ENCODE measurements at regions of chr2 and their contacts with region 1.

Region 1: GRCh38 chr2:30711646-30712085 is 95.6 kb downstream of the CAPN13 start:
- DNase-seq: peak; percentile 86
- H3K4me3 Mint-ChIP-seq: no peak overlapping the region
- H3K27ac Mint-ChIP-seq: no peak overlapping the region
- H3K4me1 Mint-ChIP-seq: peaks cover 15% of the 10 kb centered on the region
- H3K27me3 Mint-ChIP-seq: no peaks in the 10 kb centered on the region

Region 2: DNA sequence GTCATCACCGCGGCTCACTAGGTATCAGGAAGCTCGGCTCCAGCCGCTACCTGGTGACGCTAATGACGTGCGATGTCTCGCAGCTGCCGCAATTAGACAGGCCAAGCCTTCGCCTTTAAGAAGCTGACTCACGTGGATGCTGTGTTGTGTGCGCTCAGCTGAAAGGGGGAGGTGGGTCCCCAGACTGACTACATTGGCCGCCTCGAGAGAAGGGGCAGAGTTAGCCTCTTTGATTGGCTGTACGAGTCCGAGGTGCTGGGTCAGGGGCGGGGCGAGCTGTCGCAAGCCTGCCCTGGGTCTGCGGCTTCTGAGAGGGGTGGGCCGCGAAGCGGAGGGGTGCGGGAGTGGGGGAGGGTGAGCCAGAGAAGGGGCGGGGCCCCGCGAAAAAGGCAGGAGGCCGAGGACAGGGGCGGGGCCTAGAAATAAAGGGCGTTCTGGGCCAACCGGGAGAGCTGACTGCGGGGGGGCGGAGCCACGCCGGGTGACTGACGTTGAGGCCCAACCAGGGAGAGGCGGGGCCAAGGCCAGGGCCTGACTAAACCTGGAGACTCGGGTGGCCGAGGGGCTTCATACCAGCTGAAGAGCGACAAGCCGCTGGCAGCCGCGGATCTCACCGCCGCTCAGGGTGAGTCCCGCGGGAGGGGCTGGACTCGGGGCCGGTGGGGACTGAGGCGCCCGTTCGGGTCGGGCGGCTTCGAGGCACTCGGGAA is 565.1 kb before region 1 on chr2 and contains the start of gene YPEL5:
- CTCF ChIA-PET with region 1: interaction called, 21 read pairs
- POLR2A ChIA-PET with region 1: interaction called, 3 read pairs
- DNase-seq: peak; percentile 99
- H3K4me3 Mint-ChIP-seq: peak within 1 kb of the TSS; percentile 81
- H3K27ac Mint-ChIP-seq: peak within 1 kb of the TSS; percentile 93
- H3K4me1 Mint-ChIP-seq: peaks cover 40% of the 10 kb centered on the region
- H3K27me3 Mint-ChIP-seq: no peaks in the 10 kb centered on the region
- total RNA-seq, gene YPEL5: 51.2 to 52.9 TPM

Region 3: DNA sequence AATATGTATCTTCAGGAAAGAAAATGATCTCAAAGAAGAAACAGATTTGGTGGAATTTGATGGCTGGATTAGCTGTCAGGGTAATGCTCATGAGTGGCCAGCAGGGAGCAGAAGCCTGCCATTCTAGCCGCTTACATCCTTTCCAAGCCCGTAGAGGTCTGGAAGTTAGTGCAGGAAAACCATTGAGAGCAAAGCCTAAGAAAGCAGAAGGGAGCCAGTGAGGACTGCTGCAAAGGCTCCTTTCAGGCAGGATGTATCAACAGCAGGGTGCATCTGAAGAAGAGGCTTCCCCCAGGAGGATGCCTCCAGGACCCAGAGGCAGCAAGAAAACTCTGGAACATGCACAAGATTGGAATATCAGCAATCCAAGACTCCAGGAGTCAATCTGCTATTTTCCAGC is 503.2 kb before region 1 on chr2:
- CTCF ChIA-PET with region 1: interaction called, 128 read pairs
- POLR2A ChIA-PET with region 1: interaction called, 11 read pairs
- DNase-seq: peak; percentile 41
- H3K4me3 Mint-ChIP-seq: no peak overlapping the region
- H3K27ac Mint-ChIP-seq: no peak overlapping the region
- H3K4me1 Mint-ChIP-seq: peaks cover 16% of the 10 kb centered on the region
- H3K27me3 Mint-ChIP-seq: no peaks in the 10 kb centered on the region

Region 4: GRCh38 chr2:30686000-30686399 is 25.7 kb before region 1 on chr2:
- CTCF ChIA-PET with region 1: interaction called, 23 read pairs
- POLR2A ChIA-PET with region 1: no interaction called
- DNase-seq: no peak
- H3K4me3 Mint-ChIP-seq: no peak overlapping the region
- H3K27ac Mint-ChIP-seq: no peak overlapping the region
- H3K4me1 Mint-ChIP-seq: no peaks in the 10 kb centered on the region
- H3K27me3 Mint-ChIP-seq: no peaks in the 10 kb centered on the region

Region 5: DNA sequence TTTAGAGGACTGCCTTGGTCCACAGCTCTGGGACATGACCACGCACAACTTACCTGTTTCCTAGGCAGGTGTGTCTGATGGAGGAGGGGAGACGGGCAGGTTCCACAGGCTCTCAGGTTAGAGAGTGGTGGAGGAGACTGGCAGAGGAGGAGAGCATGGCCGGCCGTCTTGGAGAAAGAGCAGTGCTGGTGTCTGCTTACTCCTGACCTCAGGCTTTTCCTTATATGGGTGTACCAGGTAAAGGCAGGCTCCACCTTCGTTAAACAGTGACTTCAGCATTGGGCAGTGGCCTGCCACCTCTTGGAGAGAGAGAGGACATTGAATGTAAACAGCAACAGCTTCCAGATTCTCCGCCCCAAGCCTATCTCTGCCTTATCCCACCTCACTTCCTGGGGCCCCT is 95.6 kb after region 1 on chr2 and contains the start of gene CAPN13:
- CTCF ChIA-PET with region 1: no interaction called
- POLR2A ChIA-PET with region 1: no interaction called
- DNase-seq: no peak
- H3K4me3 Mint-ChIP-seq: no peak within 1 kb of the TSS
- H3K27ac Mint-ChIP-seq: no peak within 1 kb of the TSS
- H3K4me1 Mint-ChIP-seq: no peaks in the 10 kb centered on the region
- H3K27me3 Mint-ChIP-seq: peaks cover 3% of the 10 kb centered on the region
- total RNA-seq, gene CAPN13: not detected

Region 6: GRCh38 chr2:30862054-30862651 is 150.5 kb after region 1 on chr2:
- CTCF ChIA-PET with region 1: interaction called, 17 read pairs
- POLR2A ChIA-PET with region 1: no interaction called
- DNase-seq: peak; percentile 42
- H3K4me3 Mint-ChIP-seq: no peak overlapping the region
- H3K27ac Mint-ChIP-seq: no peak overlapping the region
- H3K4me1 Mint-ChIP-seq: peaks cover 18% of the 10 kb centered on the region
- H3K27me3 Mint-ChIP-seq: peaks cover 8% of the 10 kb centered on the region

Region 7: GRCh38 chr2:30899516-30900054 is 187.9 kb after region 1 on chr2:
- CTCF ChIA-PET with region 1: no interaction called
- POLR2A ChIA-PET with region 1: no interaction called
- DNase-seq: no peak
- H3K4me3 Mint-ChIP-seq: no peak overlapping the region
- H3K27ac Mint-ChIP-seq: no peak overlapping the region
- H3K4me1 Mint-ChIP-seq: no peaks in the 10 kb centered on the region
- H3K27me3 Mint-ChIP-seq: peaks cover 2% of the 10 kb centered on the region